ENCODE measurements at regions of chr20 and their contacts with region 1.

Region 1: GRCh38 chr20:62500237-62500864 is 24.6 kb upstream of the GATA5 start:
- DNase-seq: peak; percentile 76 to 81 (median 80)
- ATAC-seq: peak; percentile 77 to 89 (median 88)
- H3K4me3 ChIP-seq: no peak overlapping the region
- H3K27ac ChIP-seq: no peak overlapping the region
- H3K4me1 ChIP-seq: no peaks in the 10 kb centered on the region
- H3K27me3 ChIP-seq: no peaks in the 10 kb centered on the region
- CTCF ChIP-seq: peak; percentile 60 to 88 (median 68)
- POLR2A ChIP-seq: no peak

Region 2: DNA sequence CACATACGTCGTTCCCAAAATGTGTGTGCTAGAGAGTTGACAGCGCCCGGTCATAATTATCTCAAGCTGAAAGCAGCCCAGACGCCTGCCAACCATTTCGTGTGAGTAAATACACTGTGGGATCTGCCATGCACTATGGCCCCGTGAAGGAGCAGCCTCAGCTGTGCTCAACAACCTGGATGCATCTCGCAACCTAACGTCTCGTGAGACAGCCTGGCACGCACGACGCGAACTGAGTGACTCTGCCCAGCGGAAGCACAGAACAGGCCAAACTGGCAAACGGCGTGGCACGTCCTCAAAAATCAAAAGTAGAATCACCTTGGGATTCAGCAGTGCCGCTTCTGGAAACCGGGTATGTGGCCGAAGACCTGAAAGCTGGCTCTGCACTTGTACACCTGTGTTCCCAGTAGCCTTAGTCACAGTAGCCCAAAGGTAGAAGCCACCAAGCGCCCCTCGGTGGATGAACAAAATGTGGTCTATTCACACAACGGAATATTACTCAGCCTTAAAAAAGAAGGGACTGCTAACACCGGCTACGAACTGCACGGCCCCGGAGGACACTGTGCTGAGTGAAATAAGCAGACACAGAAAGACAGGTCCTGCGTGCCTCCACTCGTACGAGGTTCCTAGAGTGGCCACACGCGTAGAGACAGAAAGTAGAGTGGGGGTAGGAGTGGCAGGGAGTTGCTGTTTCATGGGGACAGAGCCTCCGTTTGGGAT is 114.8 kb after region 1 on chr20:
- intact Hi-C with region 1: loop called in 1 of 2 experiments (anchors 2 kb)
- DNase-seq: no peak
- ATAC-seq: no peak
- H3K4me3 ChIP-seq: no peak overlapping the region
- H3K27ac ChIP-seq: no peak overlapping the region
- H3K4me1 ChIP-seq: peaks cover 0 to 3% (median 0%) of the 10 kb centered on the region in 4 donors
- H3K27me3 ChIP-seq: no peaks in the 10 kb centered on the region
- CTCF ChIP-seq: no peak
- POLR2A ChIP-seq: no peak

Region 3: GRCh38 chr20:62740286-62741141 is 240.2 kb after region 1 on chr20:
- intact Hi-C with region 1: no loop called
- DNase-seq: peak in 2 of 3 donors; percentile 27 to 40
- ATAC-seq: peak in 3 of 4 donors; percentile 23 to 35 (median 23)
- H3K4me3 ChIP-seq: no peak overlapping the region
- H3K27ac ChIP-seq: no peak overlapping the region
- H3K4me1 ChIP-seq: no peaks in the 10 kb centered on the region
- H3K27me3 ChIP-seq: no peaks in the 10 kb centered on the region
- CTCF ChIP-seq: no peak
- POLR2A ChIP-seq: no peak

Measured in right lobe of liver (tissue), 6 donors.